ENCODE measurements at regions of chr1 and their contacts with region 1.

Region 1: GRCh38 chr1:22275721-22276395 is 133.0 kb upstream of the WNT4 start:
- DNase-seq: peak; percentile 68 to 79
- H3K4me3 ChIP-seq: no peak overlapping the region
- H3K4me3 Mint-ChIP-seq: no peak overlapping the region
- H3K27ac Mint-ChIP-seq: no peak overlapping the region
- H3K4me1 ChIP-seq: peaks cover 15% of the 10 kb centered on the region
- H3K4me1 Mint-ChIP-seq: peaks cover 13% of the 10 kb centered on the region
- H3K27me3 ChIP-seq: no peaks in the 10 kb centered on the region
- H3K27me3 Mint-ChIP-seq: no peaks in the 10 kb centered on the region
- CTCF ChIP-seq: peak; percentile 85 to 90

Region 2: DNA sequence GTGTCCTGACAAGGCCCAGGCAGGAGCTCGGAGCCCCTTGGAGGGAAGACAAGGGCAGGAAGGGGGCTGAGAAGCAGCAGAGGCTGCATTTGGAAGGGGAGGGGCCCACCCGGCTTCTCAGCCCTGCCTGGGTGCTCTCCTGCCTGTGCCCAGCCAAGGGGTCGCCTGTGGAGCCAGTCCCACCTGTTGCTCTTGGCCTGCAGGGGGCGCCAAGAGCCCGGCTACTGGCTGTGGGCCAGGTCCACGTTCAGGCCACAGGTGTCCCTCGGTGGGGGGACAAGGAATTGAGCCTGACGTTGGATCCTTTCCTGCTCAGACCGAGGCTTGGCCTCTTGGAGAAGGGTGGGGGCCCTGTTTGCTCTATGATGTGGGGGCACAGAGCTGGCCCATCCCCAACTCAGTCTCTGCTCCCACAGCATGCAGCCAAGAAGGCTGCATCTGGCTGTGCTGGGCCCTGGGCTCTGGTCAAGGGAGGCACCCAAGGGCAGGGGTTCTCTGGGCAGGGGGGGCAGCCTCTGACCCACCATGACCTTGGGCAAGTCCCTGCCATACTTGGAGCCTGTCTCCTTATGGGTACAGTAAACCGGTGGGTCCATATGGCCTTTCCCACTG is 143.9 kb before region 1 on chr1:
- CTCF ChIA-PET with region 1: no interaction called
- POLR2A ChIA-PET with region 1: no interaction called
- intact Hi-C with region 1: loop called (anchors 5 kb)
- DNase-seq: peak; percentile 67 to 78
- H3K4me3 ChIP-seq: no peak overlapping the region
- H3K4me3 Mint-ChIP-seq: no peak overlapping the region
- H3K27ac Mint-ChIP-seq: no peak overlapping the region
- H3K4me1 ChIP-seq: no peaks in the 10 kb centered on the region
- H3K4me1 Mint-ChIP-seq: no peaks in the 10 kb centered on the region
- H3K27me3 ChIP-seq: no peaks in the 10 kb centered on the region
- H3K27me3 Mint-ChIP-seq: no peaks in the 10 kb centered on the region
- CTCF ChIP-seq: peak; percentile 88 to 90

Region 3: DNA sequence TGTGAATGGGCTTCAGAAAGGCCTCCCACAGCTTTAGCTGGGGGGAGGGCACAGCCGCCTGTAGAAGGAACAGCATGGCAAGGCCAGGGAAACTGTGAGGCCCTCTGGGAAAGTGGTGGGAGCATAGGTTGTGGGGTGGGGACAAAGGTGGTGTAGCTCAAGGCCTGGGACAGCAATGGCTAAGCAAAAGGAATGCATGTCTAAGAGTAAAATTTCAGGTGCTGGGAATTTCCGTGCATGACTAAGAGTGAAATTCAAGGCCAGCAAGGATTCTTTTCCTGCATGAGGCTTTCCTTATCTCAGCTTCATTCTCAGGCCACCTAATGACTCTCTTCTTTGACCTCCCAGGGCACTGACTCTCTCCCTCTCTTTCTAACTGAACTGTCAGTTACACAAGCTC is 46.5 kb before region 1 on chr1:
- CTCF ChIA-PET with region 1: no interaction called
- POLR2A ChIA-PET with region 1: no interaction called
- intact Hi-C with region 1: loop called (anchors 5 kb)
- DNase-seq: peak in 1 of 2 experiments; percentile 29
- H3K4me3 ChIP-seq: no peak overlapping the region
- H3K4me3 Mint-ChIP-seq: no peak overlapping the region
- H3K27ac Mint-ChIP-seq: no peak overlapping the region
- H3K4me1 ChIP-seq: peaks cover 18% of the 10 kb centered on the region
- H3K4me1 Mint-ChIP-seq: peaks cover 19% of the 10 kb centered on the region
- H3K27me3 ChIP-seq: no peaks in the 10 kb centered on the region; the same call in 1 of the 2 replicates
- H3K27me3 Mint-ChIP-seq: no peaks in the 10 kb centered on the region
- CTCF ChIP-seq: no peak

Region 4: GRCh38 chr1:22259551-22260282 is 16.1 kb before region 1 on chr1:
- CTCF ChIA-PET with region 1: no interaction called
- POLR2A ChIA-PET with region 1: no interaction called
- intact Hi-C with region 1: no loop called
- DNase-seq: peak; percentile 45 to 52
- H3K4me3 ChIP-seq: no peak overlapping the region
- H3K4me3 Mint-ChIP-seq: peak overlapping the region; percentile 30
- H3K27ac Mint-ChIP-seq: peak overlapping the region; percentile 4
- H3K4me1 ChIP-seq: peaks cover 47% of the 10 kb centered on the region
- H3K4me1 Mint-ChIP-seq: peaks cover 45% of the 10 kb centered on the region
- H3K27me3 ChIP-seq: no peaks in the 10 kb centered on the region
- H3K27me3 Mint-ChIP-seq: no peaks in the 10 kb centered on the region
- CTCF ChIP-seq: peak in 1 of 2 experiments; percentile 1